HCT116 (cell line): ENCODE measurements at regions of chr10 and their contacts with region 1.

Region 1: DNA sequence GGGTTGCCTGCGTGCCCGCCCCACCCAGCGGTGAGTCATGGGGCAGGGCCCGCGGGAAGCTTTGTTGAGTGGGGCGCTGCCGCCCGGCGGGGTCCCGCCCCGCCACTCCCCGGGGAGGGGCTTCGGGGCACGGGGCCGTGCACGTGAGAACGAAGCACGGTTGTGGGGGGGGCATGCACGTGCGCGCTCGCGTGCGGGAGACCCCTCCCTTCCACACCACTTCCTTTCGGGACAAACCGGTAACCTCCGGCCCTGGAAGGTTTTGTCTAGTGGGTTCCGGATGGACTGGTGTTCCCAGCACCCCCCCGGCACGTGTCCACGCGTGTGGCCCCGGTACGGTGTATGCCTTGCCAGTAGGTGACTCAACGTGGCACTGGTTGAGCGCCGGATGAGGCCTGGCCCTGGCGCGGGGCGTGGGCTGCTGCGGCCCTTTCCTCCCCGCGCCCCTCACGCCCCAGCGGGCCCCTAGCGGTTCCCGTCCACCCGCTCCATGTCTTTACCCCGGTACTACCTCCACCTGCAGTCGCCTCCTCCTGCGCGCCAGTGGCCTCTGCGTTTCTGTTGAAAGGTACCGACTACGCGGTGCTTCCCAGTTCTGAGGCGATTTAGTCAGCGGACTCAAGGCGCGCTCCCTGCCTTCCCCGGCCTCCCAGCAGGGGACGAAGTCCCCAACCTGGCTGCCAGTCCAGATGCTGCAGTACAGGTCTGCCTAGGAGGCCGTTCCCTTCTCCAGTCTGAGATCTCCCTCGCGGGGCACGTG is 3.1 kb downstream of the ADIRF start:
- DNase-seq: peak; percentile 88
- ATAC-seq: peak; percentile 49
- H3K4me3 ChIP-seq: peak overlapping the region; percentile 70 to 79
- H3K27ac ChIP-seq: peak overlapping the region; percentile 95
- H3K4me1 ChIP-seq: peaks cover 51 to 83% of the 10 kb centered on the region in 2 experiments
- H3K27me3 ChIP-seq: no peaks in the 10 kb centered on the region
- CTCF ChIP-seq: 0 out of 6 replicates have a peak, but pooled peaks of 1 of the 3 experiments have one; percentile 11
- POLR2A ChIP-seq: peak; percentile 32
- RAD21 ChIP-seq: no peak

Region 2: DNA sequence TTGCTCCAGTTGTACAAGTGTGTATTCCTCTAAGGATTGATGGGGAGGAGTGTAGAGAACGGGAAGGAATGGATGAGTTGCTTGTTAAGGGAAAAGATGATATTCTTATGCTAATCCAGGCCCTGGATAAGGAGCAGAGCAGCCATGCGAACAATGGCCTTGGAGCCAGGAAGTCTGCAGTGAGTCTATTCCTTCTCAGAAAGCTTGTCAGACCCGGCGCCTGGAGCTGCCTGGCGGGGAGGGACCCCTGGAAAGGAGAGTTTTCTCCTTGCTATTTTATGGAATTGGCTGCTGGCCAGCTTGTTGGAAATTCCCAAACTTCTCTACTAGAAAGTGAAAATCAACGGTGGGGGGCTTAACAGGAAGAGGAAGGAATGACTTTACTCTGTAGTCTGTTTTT is 103.1 kb before region 1 on chr10:
- CTCF ChIA-PET with region 1: no interaction called
- POLR2A ChIA-PET with region 1: no interaction called
- RAD21 ChIA-PET with region 1: no interaction called
- intact Hi-C with region 1: no loop called
- DNase-seq: no peak
- ATAC-seq: no peak
- H3K4me3 ChIP-seq: no peak overlapping the region
- H3K27ac ChIP-seq: no peak overlapping the region
- H3K4me1 ChIP-seq: peaks cover 4 to 5% of the 10 kb centered on the region in 2 experiments; a peak in 3 of 4 replicates
- H3K27me3 ChIP-seq: no peaks in the 10 kb centered on the region
- CTCF ChIP-seq: no peak
- POLR2A ChIP-seq: no peak
- RAD21 ChIP-seq: no peak

Region 3: GRCh38 chr10:87094373-87095235 is 123.2 kb after region 1 on chr10 and contains the starts of genes GLUD1 and SHLD2:
- CTCF ChIA-PET with region 1: interaction called, 4 read pairs
- POLR2A ChIA-PET with region 1: interaction called, 6 read pairs
- RAD21 ChIA-PET with region 1: interaction called in 1 of 2 experiments, 3 read pairs
- intact Hi-C with region 1: loop called (anchors 2 kb)
- DNase-seq: peak; percentile 87
- ATAC-seq: peak; percentile 84
- H3K4me3 ChIP-seq: peak within 1 kb of the TSS; percentile 80 to 81
- H3K27ac ChIP-seq: peak within 1 kb of the TSS; percentile 93
- H3K4me1 ChIP-seq: peaks cover 25 to 29% of the 10 kb centered on the region in 2 experiments; a peak in 3 of 4 replicates
- H3K27me3 ChIP-seq: no peaks in the 10 kb centered on the region
- CTCF ChIP-seq: no peak
- POLR2A ChIP-seq: peak; percentile 69
- RAD21 ChIP-seq: no peak
- total RNA-seq, gene GLUD1: 131 TPM
- total RNA-seq, gene SHLD2: 28.9 TPM